ENCODE measurements at regions of chr16 and their contacts with region 1.

Region 1: DNA sequence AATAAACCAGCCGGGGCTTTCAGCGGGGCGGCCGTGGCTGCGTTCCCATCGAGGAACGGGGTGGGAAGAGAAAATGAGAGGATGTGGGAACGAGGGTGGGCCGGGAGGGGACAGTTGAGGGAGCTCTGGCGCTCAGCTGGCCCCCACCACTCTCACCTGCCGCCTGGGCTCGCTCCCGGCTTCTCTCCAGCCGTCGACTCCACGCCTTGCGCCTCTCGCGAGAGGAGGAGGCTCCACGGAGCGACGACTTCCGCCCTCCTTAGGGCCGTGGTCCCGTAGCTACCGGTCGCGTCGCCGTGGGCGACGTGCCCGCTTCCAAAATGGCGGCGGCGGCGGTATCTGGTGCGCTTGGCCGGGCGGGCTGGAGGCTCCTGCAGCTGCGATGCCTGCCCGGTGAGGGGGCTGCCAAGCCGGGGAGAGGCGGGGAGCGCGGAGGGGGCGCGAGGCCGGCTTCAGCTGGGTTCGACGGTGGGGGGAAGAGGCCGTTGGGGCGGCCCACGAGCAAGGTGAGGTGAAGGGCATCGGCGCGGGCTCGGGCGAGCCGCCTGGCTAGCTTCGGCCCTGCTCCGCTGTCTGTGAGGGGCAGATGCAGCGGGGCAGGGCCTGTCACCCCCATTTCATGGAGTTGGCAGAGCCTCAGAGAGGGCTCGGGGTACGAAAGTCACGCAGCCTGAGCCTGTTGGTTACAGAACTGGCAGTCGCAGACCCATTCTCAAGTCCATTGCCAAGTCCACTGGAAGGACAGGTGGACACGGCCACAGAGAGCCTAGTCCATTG is at the starts of genes CIAPIN1 and COQ9:
- DNase-seq: peak; percentile 89 to 94
- ATAC-seq: peak; percentile 92 to 97
- H3K4me3 ChIP-seq: peak within 1 kb of the TSS; percentile 82 to 97 (median 95)
- H3K27ac ChIP-seq: peak within 1 kb of the TSS; percentile 98 to 99 (median 98)
- H3K4me1 ChIP-seq: peaks cover 32 to 38% of the 10 kb centered on the region in 2 donors
- H3K27me3 ChIP-seq: no peaks in the 10 kb centered on the region
- CTCF ChIP-seq: no peak
- POLR2A ChIP-seq: peak; percentile 95 to 97
- total RNA-seq, gene CIAPIN1: 31.0 to 38.8 (median 37.9) TPM
- total RNA-seq, gene COQ9: 107 to 171 (median 135) TPM

Region 2: DNA sequence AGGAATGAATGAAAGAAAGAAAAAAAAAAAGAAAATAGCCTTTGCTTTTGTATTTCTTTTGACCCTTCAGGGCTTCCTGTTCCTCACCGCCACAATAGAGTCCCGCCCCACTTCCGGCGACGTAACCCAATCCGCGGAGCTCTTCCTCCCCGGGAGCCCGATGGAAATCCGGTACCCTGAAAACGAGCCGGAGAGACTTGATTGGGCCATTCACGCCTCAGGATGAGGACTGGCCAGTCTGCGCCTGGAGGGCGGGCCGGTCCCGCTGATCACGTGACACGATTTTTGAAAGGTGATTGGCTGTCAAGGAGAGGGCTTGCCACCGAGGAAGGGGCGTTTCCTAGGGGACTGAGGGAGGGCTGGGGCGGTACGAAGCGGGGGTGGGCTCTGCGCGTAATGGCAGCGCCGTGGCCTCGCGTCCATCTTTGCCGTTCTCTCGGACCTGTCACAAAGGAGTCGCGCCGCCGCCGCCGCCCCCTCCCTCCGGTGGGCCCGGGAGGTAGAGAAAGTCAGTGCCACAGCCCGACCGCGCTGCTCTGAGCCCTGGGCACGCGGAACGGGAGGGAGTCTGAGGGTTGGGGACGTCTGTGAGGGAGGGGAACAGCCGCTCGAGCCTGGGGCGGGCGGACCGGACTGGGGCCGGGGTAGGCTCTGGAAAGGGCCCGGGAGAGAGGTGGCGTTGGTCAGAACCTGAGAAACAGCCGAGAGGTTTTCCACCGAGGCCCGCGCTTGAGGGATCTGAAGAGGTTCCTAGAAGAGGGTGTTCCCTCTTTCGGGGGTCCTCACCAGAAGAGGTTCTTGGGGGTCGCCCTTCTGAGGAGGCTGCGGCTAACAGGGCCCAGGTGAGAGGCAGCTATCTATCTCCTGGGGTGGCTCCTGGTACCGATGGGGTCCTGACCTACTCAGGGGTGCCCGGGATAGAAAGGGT is 261.2 kb before region 1 on chr16 and contains the starts of genes PSME3IP1 and RSPRY1:
- in situ Hi-C with region 1: no loop called
- intact Hi-C with region 1: loop called (anchors 2 kb)
- DNase-seq: peak; percentile 99
- ATAC-seq: peak; percentile 97 to 99
- H3K4me3 ChIP-seq: peak within 1 kb of the TSS; percentile 81 to 94 (median 92)
- H3K27ac ChIP-seq: peak within 1 kb of the TSS; percentile 92 to 97 (median 95)
- H3K4me1 ChIP-seq: peaks cover 32 to 40% of the 10 kb centered on the region in 2 donors
- H3K27me3 ChIP-seq: no peaks in the 10 kb centered on the region
- CTCF ChIP-seq: peak in 2 of 5 experiments; percentile 35 to 40
- POLR2A ChIP-seq: peak; percentile 84 to 85
- total RNA-seq, gene PSME3IP1: 43.8 to 57.6 (median 53.4) TPM
- total RNA-seq, gene RSPRY1: 15.4 to 24.1 (median 20.7) TPM

Region 3: GRCh38 chr16:57316390-57317017 is 130.9 kb before region 1 on chr16:
- in situ Hi-C with region 1: no loop called
- intact Hi-C with region 1: no loop called
- DNase-seq: no peak
- ATAC-seq: peak; percentile 74 to 77
- H3K4me3 ChIP-seq: no peak overlapping the region
- H3K27ac ChIP-seq: peak overlapping the region; percentile 55 to 71 (median 59)
- H3K4me1 ChIP-seq: peaks cover 0 to 7% of the 10 kb centered on the region in 2 donors
- H3K27me3 ChIP-seq: no peaks in the 10 kb centered on the region
- CTCF ChIP-seq: no peak
- POLR2A ChIP-seq: no peak

Region 4: DNA sequence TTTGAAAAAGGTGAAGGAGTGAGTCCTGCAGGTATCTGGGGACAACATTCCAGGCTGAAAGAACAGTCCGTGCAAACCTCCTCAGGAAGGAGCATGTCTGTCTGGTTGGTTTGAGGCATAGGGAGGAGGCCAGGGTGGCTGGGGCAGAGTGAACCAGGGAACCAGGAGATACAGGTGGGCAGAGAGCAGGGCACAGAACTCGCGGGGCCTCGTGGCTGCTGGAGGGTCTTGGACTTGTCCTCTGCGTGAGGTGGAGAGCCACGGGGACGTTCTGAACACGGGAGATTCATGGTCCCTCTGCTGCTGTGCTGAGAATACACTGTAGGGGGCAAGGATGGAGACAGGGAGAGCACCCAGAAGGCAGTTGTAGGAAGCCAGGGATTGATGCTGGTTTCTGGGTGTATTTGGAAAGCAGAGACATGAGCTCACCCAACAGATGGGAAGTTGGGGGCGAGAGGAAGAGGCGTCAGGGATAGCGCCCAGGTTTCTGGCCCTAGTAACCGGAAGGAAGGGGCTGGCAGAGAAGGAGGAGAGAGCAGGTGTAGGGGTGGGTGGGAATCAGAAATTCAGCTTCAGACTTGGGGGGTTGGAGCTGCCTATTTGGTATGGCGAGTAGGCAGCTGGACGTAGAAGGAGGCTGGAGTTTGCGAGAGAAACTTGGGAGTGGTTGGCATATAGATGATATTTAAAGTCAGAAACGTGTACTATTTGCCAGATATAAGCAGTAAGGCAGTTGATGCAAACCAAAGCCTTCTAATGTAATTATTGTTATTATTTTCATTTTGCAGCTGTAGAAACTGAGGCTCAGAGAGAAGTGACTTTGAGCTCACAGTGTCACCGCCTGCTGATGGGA is 43.2 kb before region 1 on chr16 and contains the start of gene CCL17:
- in situ Hi-C with region 1: no loop called
- intact Hi-C with region 1: no loop called
- DNase-seq: no peak
- ATAC-seq: no peak
- H3K4me3 ChIP-seq: no peak within 1 kb of the TSS
- H3K27ac ChIP-seq: no peak within 1 kb of the TSS
- H3K4me1 ChIP-seq: no peaks in the 10 kb centered on the region
- H3K27me3 ChIP-seq: no peaks in the 10 kb centered on the region
- CTCF ChIP-seq: no peak
- POLR2A ChIP-seq: no peak
- total RNA-seq, gene CCL17: not detected

Region 5: DNA sequence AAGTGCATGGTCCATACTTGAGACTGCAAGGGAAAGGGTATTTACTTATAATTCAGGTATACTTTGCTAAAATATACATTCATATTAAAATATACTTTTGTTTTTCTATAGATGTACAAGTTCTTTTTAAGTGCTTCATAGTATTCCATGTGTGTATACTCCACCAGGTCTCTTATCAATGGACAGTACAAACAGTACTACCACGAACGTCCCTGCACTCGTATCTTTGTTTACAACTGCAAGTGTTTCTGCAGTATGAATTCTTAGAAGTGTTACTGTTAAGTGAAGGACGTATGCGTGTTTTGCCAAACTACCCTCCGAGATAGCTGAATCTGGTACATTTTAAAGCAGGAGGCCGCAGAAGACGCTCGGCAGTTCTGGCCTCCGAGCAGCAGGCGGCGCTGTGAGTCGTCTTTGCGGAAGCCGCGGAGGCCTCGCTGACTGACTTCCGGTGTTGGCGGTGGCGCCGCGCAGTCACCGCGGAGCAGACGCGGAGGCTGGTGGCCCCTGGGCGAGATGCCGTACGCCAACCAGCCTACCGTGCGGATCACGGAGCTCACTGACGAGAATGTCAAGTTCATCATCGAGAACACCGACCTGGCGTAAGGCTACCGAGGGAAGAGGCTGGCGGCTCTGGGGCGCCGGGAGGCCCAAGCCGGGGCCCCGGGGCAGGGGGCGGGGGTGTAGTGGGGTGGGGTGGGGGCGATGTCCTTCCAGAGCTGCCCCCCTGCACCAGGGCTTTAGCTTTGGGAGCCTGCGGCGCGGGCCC is 15.0 kb after region 1 on chr16 and contains the start of gene POLR2C:
- in situ Hi-C with region 1: no loop called
- intact Hi-C with region 1: loop called (anchors 1 kb)
- DNase-seq: peak; percentile 66 to 80
- ATAC-seq: peak; percentile 88 to 92
- H3K4me3 ChIP-seq: peak within 1 kb of the TSS; percentile 77 to 96 (median 88)
- H3K27ac ChIP-seq: peak within 1 kb of the TSS; percentile 86 to 92 (median 88)
- H3K4me1 ChIP-seq: peaks cover 15 to 18% of the 10 kb centered on the region in 2 donors
- H3K27me3 ChIP-seq: no peaks in the 10 kb centered on the region
- CTCF ChIP-seq: peak; percentile 89 to 97 (median 96)
- POLR2A ChIP-seq: peak; percentile 80 to 92
- total RNA-seq, gene POLR2C: 97.2 to 162 (median 134) TPM

Region 6: GRCh38 chr16:57775661-57776469 is 328.5 kb after region 1 on chr16:
- in situ Hi-C with region 1: no loop called
- intact Hi-C with region 1: no loop called
- DNase-seq: peak; percentile 51 to 73
- ATAC-seq: peak; percentile 96 to 97
- H3K4me3 ChIP-seq: no peak overlapping the region
- H3K27ac ChIP-seq: no peak overlapping the region
- H3K4me1 ChIP-seq: peaks cover 0 to 3% of the 10 kb centered on the region in 2 donors
- H3K27me3 ChIP-seq: no peaks in the 10 kb centered on the region
- CTCF ChIP-seq: peak; percentile 75 to 85 (median 76)
- POLR2A ChIP-seq: no peak

Region 7: DNA sequence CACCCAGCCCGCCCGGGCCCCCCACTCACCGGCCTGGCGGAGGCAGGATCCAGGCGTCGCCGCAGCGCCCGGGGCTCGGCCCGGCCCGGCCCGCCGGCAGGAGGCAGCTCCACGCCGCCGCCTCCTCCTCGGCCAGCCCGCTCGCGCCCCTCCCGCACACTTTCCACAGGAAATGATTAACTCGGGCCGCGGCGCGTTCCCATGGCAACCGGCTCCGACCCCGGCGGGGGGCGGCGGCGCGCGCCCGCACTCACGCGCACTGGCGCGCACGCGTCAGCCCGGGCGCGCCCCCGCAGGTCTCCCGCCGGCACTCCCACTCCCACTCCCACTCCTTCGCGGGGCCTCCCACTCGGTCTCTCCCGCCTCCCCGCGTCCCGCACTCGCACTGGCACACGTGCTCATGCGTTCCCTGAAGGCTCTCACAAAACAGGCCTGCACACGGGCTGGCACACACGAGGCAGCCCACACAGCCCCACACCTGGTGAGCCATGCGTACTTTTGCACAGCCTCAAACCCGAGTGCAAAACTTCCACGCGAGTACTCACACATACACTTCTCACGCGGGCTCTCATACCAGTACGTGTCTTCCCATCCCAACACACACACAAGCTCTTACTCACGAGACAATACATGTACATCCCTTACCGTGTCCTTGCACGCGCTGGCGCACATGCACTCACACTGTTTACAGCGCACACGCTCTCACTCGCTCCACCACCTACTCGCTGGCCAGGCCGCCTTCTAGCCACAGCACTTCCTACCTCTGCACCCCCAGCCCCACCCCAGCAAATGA is 355.2 kb after region 1 on chr16 and contains the start of gene KIFC3:
- in situ Hi-C with region 1: no loop called
- intact Hi-C with region 1: no loop called
- DNase-seq: peak in 1 of 2 donors; percentile 31
- ATAC-seq: peak; percentile 19 to 37
- H3K4me3 ChIP-seq: peak within 1 kb of the TSS; percentile 52 to 58 (median 54)
- H3K27ac ChIP-seq: peak within 1 kb of the TSS; percentile 64 to 77 (median 66)
- H3K4me1 ChIP-seq: peaks cover 52 to 59% of the 10 kb centered on the region in 2 donors
- H3K27me3 ChIP-seq: no peaks in the 10 kb centered on the region
- CTCF ChIP-seq: peak in 4 of 5 experiments; percentile 6 to 50 (median 28)
- POLR2A ChIP-seq: peak; percentile 5 to 6
- total RNA-seq, gene KIFC3: 2.1 to 12.0 (median 3.2) TPM